Activated CD4-positive, alpha-beta memory T cell treated with anti-CD3 and anti-CD28 coated beads for 36 hours (primary cell): ENCODE measurements at regions of chrX and their contacts with region 1.

Region 1: DNA sequence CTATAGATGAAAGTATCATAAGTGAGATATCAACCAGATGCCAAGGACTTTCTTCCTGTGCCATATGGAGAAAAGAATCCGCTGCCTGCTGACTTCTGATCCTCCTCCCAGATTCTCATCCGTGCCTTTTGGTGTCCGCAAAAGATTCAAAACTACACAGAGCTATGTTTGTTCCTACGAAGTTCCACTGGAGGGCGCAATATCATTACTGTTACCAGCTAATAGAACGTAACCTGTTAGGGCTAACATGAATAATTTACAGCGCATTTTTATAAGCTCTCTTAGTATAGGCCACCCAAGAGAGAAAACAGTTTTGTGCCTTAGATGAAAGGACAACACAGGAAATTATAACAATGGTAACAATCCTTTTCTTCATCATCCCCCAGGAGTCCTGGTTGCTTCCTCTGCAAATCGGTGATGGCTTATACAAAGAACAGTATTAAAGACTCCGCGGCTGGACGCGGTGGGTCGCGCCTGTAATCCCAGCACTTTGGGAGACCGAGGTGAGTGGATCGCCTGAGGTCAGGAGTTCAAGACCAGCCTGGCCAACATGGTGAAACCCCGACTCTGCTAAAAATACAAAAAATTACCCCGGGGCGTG is 22.8 kb upstream of the CENPVL3 start:
- DNase-seq: peak; percentile 8
- H3K4me3 Mint-ChIP-seq: no peak overlapping the region
- H3K27ac Mint-ChIP-seq: no peak overlapping the region
- H3K4me1 Mint-ChIP-seq: no peaks in the 10 kb centered on the region
- H3K27me3 Mint-ChIP-seq: peaks cover 8% of the 10 kb centered on the region

Region 2: GRCh38 chrX:51860679-51861078 is 219.2 kb after region 1 on chrX:
- CTCF ChIA-PET with region 1: interaction called, 3 read pairs
- POLR2A ChIA-PET with region 1: no interaction called
- intact Hi-C with region 1: loop called (anchors 5 kb)
- DNase-seq: peak; percentile 7
- H3K4me3 Mint-ChIP-seq: no peak overlapping the region
- H3K27ac Mint-ChIP-seq: no peak overlapping the region
- H3K4me1 Mint-ChIP-seq: peaks cover 7% of the 10 kb centered on the region
- H3K27me3 Mint-ChIP-seq: no peaks in the 10 kb centered on the region